ENCODE measurements at regions of chr5 and their contacts with region 1.

Region 1: GRCh38 chr5:108753877-108754276 is 6.2 kb downstream of the FER start:
- DNase-seq: peak; percentile 68
- H3K4me3 Mint-ChIP-seq: peak overlapping the region; percentile 70
- H3K27ac Mint-ChIP-seq: peak overlapping the region; percentile 94
- H3K4me1 Mint-ChIP-seq: peaks cover 13% of the 10 kb centered on the region
- H3K27me3 Mint-ChIP-seq: no peaks in the 10 kb centered on the region
- CTCF ChIP-seq: no peak

Region 2: GRCh38 chr5:108876451-108876850 is 122.6 kb after region 1 on chr5:
- CTCF ChIA-PET with region 1: interaction called, 3 read pairs
- POLR2A ChIA-PET with region 1: interaction called, 14 read pairs
- intact Hi-C with region 1: loop called (anchors 10 kb)
- DNase-seq: no peak
- H3K4me3 Mint-ChIP-seq: no peak overlapping the region
- H3K27ac Mint-ChIP-seq: no peak overlapping the region
- H3K4me1 Mint-ChIP-seq: peaks cover 11% of the 10 kb centered on the region
- H3K27me3 Mint-ChIP-seq: no peaks in the 10 kb centered on the region
- CTCF ChIP-seq: no peak